ENCODE measurements at regions of chr10 and their contacts with region 1.

Region 1: GRCh38 chr10:119257899-119258419 is 50.6 kb downstream of the GRK5 start:
- DNase-seq: no peak
- ATAC-seq: no peak
- H3K4me3 ChIP-seq: no peak overlapping the region
- H3K27ac ChIP-seq: no peak overlapping the region
- H3K4me1 ChIP-seq: peaks cover 7% of the 10 kb centered on the region
- H3K27me3 ChIP-seq: no peaks in the 10 kb centered on the region
- CTCF ChIP-seq: no peak

Region 2: DNA sequence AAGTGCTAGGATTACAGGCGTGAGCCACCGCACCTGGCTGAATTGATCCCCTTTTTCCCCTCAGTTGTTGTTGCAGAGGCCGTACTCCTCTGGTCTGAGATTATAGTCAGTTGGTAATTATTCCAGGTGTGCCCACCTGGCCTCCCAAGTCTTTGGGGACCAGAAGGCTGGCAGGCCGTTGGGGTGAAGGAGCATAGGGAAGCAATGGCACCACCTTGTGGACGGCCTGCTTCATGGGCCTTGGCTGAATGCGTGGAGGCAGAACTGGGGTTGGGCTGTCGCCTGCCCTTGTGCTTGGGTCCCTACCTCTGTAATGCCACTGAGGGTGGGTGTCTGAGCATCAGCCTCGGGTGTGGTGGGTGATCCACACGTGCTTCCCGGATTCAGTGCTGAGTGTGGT is 158.9 kb after region 1 on chr10:
- intact Hi-C with region 1: loop called in 1 of 2 experiments (anchors 5 kb)
- DNase-seq: peak; percentile 54 to 77
- ATAC-seq: peak; percentile 64 to 76 (median 72)
- H3K4me3 ChIP-seq: no peak overlapping the region
- H3K27ac ChIP-seq: no peak overlapping the region
- H3K4me1 ChIP-seq: peaks cover 4% of the 10 kb centered on the region
- H3K27me3 ChIP-seq: no peaks in the 10 kb centered on the region
- CTCF ChIP-seq: peak; percentile 74